Common myeloid progenitor, CD34-positive (primary cell): ENCODE measurements at regions of chr20 and their contacts with region 1.

Region 1: DNA sequence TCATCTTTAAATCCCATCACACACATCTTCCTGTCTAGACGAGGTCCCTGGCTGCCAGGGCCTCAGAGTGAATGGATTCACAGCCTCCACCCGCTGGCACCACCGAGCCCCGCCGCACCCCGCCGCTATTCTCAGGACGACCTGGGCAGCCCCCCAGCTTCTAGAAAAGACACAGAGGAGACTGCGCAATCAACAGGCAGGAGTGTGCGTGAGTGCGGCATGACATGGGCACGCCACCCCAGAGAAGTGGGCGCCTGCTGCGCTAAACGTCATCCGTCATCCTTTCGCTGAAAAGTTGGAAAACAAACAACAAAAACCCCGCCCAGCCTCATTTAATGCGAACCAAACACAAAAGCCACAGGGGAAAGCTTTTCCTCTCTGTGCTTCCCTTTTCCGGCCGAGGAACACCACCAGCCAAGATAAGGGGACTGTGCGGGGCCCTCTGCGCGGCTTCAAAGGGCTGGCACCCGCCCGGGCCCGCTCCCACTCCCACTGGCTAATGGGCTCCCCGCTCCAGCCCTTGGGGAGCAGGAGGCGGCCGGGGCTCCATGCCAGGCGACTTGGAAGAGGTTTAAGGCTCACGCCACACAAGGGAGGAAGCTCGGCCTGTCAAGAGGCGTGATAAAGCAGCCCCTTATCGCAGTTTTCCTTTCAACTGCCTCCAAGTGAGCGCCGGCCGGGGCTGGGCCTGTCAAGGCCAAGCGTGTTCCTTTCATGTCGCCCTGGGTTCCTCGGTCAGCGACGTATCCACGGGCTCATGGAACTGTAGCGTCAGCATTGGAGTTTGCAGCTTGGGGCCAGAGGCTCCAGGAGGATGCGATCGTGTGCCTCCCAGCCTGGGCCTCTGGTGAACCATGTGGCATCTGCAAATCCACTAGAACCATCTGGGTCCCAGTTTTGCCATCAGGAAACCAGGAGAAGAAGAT is 50.1 kb downstream of the NFATC2 start:
- DNase-seq: peak; percentile 77 to 88 (median 82)
- H3K4me3 ChIP-seq: peak overlapping the region in 5 of 7 experiments; percentile 27 to 58 (median 52)
- H3K27ac ChIP-seq: peak overlapping the region; percentile 52 to 76
- H3K4me1 ChIP-seq: peaks cover 5 to 80% (median 75%) of the 10 kb centered on the region in 4 experiments
- H3K27me3 ChIP-seq: no peaks in the 10 kb centered on the region

Region 2: GRCh38 chr20:51463998-51464397 is 28.4 kb before region 1 on chr20:
- CTCF ChIA-PET with region 1: no interaction called
- POLR2A ChIA-PET with region 1: no interaction called
- DNase-seq: no peak
- H3K4me3 ChIP-seq: no peak overlapping the region
- H3K27ac ChIP-seq: peak overlapping the region in 1 of 2 experiments; percentile 21
- H3K4me1 ChIP-seq: peaks cover 0 to 2% (median 0%) of the 10 kb centered on the region in 4 experiments
- H3K27me3 ChIP-seq: no peaks in the 10 kb centered on the region

Region 3: DNA sequence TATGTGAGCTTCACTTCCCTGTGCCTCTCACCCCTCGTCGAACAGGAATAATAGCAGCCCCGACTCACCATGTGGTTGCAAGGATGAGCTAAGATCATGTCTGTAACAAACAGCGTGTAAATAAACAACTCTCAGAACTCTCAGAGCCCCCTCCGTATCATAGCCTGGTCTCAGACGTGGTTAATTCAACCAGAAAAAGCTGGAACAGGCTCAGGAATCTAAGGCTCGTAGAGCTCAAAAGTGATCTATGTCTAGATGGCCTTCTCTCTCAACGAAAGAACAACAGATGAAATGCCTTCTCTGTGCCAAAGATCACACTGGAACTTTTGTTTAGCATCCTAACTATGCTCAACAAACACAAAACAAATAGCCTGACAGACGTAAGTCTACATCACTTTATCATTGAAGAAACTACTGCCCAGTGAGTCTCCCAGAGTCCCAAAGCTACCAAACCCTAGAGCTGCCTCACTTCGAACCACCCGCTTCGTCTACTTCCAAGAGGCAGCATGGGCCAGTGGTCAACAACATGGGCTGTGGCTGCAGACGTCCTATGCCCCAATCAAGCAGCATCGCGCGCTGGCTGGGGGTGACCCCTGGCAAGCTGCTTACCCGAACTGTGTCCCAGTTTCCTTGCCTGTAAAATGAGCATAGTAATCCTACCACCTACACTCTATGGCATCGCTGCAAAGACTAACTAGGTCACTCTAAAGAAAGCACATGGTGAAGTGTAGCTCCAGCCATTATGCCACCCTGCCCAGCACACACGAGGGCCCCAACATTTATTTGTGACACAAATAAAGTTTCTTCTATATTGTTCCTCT is 15.0 kb after region 1 on chr20:
- CTCF ChIA-PET with region 1: interaction called, 31 read pairs
- POLR2A ChIA-PET with region 1: no interaction called
- DNase-seq: no peak
- H3K4me3 ChIP-seq: no peak overlapping the region
- H3K27ac ChIP-seq: no peak overlapping the region
- H3K4me1 ChIP-seq: peaks cover 0 to 9% (median 3%) of the 10 kb centered on the region in 4 experiments
- H3K27me3 ChIP-seq: no peaks in the 10 kb centered on the region